CD4-positive, alpha-beta memory T cell (primary cell): ENCODE measurements at regions of chr9 and their contacts with region 1.

Region 1: GRCh38 chr9:36136272-36136893 is at the start of gene GLIPR2:
- DNase-seq: peak; percentile 75 to 82 (median 79)
- H3K4me3 ChIP-seq: peak within 1 kb of the TSS; percentile 66 to 81
- H3K4me3 Mint-ChIP-seq: peak within 1 kb of the TSS; percentile 92 to 97 (median 95)
- H3K27ac ChIP-seq: peak within 1 kb of the TSS; percentile 77
- H3K27ac Mint-ChIP-seq: peak within 1 kb of the TSS; percentile 89 to 97 (median 95)
- H3K4me1 ChIP-seq: peaks cover 54% of the 10 kb centered on the region
- H3K4me1 Mint-ChIP-seq: peaks cover 35 to 56% (median 48%) of the 10 kb centered on the region in 4 donors
- H3K27me3 ChIP-seq: no peaks in the 10 kb centered on the region
- H3K27me3 Mint-ChIP-seq: no peaks in the 10 kb centered on the region
- total RNA-seq, gene GLIPR2: 17.0 to 18.9 TPM

Region 2: DNA sequence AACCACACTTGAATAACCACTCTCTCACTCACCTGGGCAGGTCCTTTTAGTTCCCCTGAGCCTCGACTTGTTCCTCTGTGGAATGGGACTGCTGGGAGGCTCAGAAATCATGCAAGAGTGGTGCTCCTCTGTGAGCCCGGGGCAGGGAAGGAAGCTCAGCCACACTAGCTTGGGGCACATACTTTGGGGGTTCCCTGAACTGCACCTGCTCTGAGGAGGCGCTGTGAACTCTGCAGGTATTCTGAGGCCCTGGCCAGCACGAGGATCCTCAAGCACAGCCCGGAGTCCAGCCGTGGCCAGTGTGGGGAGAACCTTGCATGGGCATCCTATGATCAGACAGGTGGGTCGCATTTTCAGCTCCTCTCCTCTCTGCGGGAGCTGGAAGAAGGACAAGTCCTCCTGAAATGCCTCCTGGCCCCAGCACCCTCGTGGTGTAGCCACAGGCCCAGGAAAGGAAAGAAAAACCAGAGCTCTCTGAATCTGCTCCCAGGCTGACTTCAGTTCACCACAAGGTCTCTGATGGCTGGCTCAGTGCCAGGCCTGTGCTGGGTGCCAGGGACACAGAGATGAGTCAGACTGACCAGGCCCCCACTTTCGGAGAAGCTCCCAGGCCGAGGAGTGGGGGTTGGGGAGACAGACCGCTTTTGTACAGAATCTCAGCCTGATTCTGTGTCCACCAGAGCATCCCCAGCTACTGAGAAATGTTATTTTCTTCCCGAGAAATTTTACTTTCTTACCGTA is 12.1 kb after region 1 on chr9:
- CTCF ChIA-PET with region 1: interaction called, 11 read pairs
- POLR2A ChIA-PET with region 1: interaction called, 159 read pairs
- intact Hi-C with region 1: loop called (anchors 1 kb)
- DNase-seq: peak; percentile 56 to 88 (median 61)
- H3K4me3 ChIP-seq: no peak overlapping the region
- H3K4me3 Mint-ChIP-seq: peak overlapping the region in 7 of 8 donors; percentile 17 to 77 (median 42)
- H3K27ac ChIP-seq: peak overlapping the region; percentile 73
- H3K27ac Mint-ChIP-seq: peak overlapping the region; percentile 61 to 95 (median 92)
- H3K4me1 ChIP-seq: peaks cover 100% of the 10 kb centered on the region
- H3K4me1 Mint-ChIP-seq: peaks cover 68 to 99% (median 83%) of the 10 kb centered on the region in 4 donors
- H3K27me3 ChIP-seq: no peaks in the 10 kb centered on the region
- H3K27me3 Mint-ChIP-seq: no peaks in the 10 kb centered on the region